MCF 10A (cell line): ENCODE measurements at regions of chr3 and their contacts with region 1.

Region 1: DNA sequence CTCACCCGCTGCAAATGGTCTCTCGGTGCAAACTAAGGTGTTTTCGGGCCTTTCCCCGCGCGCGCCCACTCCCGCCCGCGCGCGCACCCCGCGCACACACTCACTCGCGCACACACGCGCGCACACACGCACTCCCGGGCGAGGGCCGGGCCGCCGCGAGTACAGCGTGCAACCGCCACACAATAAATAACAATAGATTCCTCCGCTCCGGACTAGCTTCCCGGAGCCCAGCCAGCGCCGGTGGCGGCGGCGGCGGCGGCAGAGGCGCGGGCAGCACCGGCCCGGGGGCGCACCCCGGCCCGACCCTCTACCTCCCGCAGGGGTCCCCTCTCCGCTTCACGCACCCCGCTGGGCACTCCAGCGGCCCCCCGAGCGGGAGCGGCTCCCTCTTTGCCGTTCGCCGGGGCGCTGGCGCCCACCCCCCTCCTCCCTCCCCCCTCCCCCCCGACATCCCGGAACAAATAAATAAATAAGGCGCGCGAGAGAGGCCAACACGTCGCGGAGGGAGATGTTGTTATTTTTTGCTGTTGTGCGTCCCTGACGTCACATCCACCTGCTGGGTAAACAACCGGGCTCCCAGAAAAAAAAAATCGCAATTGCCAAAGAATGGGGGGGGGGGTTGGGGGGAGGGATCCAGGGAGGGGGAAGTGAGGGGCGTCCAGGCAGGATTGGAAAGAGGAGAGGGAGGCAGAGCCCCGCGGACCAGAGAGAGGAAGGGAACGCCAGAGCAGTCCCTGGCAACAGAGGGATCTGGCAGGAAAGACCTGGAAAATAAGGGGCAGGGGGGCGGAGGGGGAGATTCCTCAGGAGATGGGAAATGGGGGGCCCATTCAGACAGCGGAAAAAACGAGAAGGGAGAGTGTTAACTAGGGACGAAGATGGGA is at the start of gene FOXP1:
- DNase-seq: peak; percentile 64
- H3K4me3 Mint-ChIP-seq: peak within 1 kb of the TSS; percentile 85
- H3K27ac Mint-ChIP-seq: peak within 1 kb of the TSS; percentile 97
- H3K4me1 Mint-ChIP-seq: peaks cover 13% of the 10 kb centered on the region
- H3K27me3 Mint-ChIP-seq: no peaks in the 10 kb centered on the region
- CTCF ChIP-seq: no peak
- total RNA-seq, gene FOXP1: 49.0 and 51.1 TPM in 2 replicates

Region 2: DNA sequence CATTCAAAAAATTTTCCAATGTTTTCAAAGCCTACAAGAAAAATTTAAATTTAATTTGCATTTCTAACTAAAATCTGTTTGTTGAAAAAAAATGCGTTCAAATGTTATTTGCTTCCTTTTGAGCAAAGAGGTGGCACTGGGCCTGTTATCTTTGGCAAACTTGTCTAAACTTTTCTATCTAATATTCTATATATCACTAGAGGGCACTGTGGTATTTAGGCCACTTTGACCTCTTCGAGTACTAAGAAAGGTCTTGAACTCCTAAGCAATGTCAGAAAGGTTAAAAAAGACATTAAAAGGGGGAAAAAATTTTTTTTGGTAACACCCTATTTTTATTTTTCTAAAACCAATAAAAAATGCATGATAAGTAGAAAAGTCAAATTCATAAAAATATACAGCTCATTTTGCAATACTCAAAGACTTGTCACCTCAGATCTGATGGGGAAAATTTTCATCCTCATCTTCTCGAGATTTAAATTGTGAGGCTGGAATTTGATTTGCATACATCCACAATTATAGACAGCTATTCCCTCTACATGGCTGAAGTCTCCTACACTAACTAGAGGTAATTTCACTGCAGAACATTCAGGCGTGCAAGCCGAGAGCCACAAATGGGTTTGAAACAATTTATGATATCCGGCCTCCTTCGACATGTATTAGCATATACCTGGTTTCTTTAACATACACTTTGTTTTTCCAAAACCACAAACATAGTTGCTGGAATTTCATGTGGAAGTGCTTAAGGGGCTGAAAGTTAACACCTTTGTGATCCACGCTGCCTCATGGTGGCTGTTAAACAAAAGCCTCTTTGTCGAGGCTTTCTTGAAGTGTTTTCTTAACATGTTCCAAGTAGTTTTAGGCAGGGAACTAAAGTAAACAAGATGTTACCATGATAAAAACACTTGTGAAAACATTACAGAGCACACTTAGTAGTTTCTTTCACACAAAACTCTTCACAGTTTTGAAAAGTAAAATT is 576.7 kb before region 1 on chr3:
- CTCF ChIA-PET with region 1: interaction called, 15 read pairs
- POLR2A ChIA-PET with region 1: interaction called, 5 read pairs
- intact Hi-C with region 1: loop called (anchors 1 kb)
- DNase-seq: peak; percentile 48
- H3K4me3 Mint-ChIP-seq: no peak overlapping the region
- H3K27ac Mint-ChIP-seq: peak overlapping the region; percentile 63
- H3K4me1 Mint-ChIP-seq: peaks cover 15% of the 10 kb centered on the region
- H3K27me3 Mint-ChIP-seq: no peaks in the 10 kb centered on the region
- CTCF ChIP-seq: peak; percentile 61

Region 3: DNA sequence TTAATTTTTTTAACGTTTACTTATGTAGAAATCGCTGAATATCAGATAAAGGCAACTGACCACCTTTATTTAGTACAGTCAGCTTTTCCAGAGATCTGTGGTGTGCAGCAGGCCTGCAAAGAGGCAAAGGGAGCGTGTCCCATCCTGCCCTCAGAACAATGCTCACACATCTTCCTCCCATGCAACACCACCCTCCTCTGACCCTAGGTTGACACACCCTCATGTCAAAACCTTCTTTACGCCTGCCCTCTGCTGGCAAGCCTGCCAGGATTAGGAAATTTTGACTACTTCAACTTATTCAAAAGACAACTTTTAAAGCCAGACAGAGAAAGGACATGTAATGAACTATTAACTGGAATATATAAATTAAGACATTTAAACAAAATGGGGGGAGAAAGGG is 514.0 kb before region 1 on chr3:
- CTCF ChIA-PET with region 1: interaction called, 23 read pairs
- POLR2A ChIA-PET with region 1: interaction called, 219 read pairs
- intact Hi-C with region 1: loop called (anchors 2 kb)
- DNase-seq: peak; percentile 93
- H3K4me3 Mint-ChIP-seq: peak overlapping the region; percentile 48
- H3K27ac Mint-ChIP-seq: peak overlapping the region; percentile 10
- H3K4me1 Mint-ChIP-seq: peaks cover 25% of the 10 kb centered on the region
- H3K27me3 Mint-ChIP-seq: no peaks in the 10 kb centered on the region
- CTCF ChIP-seq: peak; percentile 71

Region 4: DNA sequence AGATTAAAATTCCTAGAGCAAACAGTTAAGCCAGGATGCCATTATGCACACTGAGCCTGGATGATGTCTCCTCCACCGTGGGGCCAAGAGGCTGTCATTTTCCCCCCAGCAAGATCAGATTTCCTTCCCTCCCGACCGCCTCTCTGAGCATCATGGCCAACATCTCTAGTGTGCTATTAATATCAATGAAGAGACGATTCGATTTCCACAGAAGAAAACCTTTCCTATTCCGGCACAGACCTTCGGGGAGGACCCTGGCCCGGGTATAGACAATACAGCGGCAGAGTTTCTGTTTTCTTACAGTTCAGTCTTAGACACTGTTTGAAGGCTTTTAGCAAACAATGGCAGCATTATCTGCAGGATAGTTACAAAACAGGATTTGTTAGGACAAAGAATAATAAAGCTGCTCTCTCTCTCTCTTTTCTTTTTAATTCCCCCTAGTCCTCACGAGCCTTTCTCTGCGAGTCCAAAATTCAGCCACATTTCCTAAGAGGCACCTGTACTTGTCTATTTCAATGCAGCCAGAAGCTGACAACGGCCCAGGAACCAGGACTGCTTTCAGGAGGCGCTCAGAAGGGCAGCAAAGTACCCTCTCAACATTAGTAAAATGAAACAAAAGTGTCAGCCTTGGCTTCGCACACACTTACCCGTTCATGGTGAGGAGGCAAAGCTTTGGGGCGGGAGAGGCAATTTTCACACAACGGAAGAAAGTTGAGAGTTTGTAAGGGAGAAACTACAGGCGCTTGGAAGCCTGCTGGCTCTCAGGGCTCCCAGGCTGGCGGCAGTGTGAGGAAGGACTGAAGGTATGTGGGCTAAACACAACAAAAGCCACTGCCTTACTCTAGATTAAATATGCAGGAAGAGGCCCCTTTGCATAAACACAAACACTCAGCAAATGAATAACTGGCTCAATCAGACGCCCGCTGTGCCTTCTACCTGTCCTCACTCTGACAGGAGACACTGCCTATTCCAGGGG is 278.3 kb before region 1 on chr3:
- CTCF ChIA-PET with region 1: interaction called, 3 read pairs
- POLR2A ChIA-PET with region 1: interaction called, 3 read pairs
- intact Hi-C with region 1: loop called (anchors 5 kb)
- DNase-seq: no peak
- H3K4me3 Mint-ChIP-seq: peak overlapping the region; percentile 53
- H3K27ac Mint-ChIP-seq: peak overlapping the region; percentile 34
- H3K4me1 Mint-ChIP-seq: peaks cover 13% of the 10 kb centered on the region
- H3K27me3 Mint-ChIP-seq: no peaks in the 10 kb centered on the region
- CTCF ChIP-seq: no peak

Region 5: DNA sequence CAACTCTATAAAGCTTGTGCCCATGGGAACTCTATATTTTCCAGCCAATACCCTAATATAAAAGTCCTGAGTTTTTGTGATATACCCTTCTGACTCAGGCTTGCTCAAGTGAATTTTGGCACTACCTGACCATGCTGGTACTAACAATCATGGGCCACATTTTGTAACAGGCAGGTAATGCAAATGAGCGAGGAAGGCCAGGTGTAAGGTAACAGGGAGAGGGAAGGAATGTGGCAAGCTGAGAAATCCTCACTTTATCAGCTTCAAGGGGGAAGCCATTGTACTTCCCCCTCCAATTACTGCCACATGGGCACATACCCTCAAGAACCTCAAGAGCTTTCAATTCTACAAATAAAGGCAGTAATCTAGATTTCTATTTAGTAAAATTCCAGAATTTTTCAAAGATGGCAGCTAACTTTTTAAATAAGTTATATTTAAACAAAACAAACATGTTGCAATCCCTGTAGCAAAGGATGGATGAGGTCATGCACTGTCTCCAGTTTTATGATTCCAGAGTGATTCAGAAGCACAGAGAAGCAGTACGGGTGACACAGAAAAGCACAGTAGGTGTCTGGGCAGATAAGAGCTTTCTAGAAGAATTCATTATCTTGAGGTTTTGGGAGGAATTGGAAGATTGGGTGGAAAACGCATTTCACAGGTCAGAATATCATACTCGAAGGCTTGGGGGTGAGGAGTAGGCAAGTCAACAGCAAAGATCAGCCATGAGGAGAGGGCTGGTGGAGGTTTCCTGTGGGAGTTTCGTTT is 87.9 kb before region 1 on chr3:
- CTCF ChIA-PET with region 1: interaction called, 6 read pairs
- POLR2A ChIA-PET with region 1: interaction called, 90 read pairs
- intact Hi-C with region 1: loop called (anchors 1 kb)
- DNase-seq: peak; percentile 89
- H3K4me3 Mint-ChIP-seq: peak overlapping the region; percentile 80
- H3K27ac Mint-ChIP-seq: peak overlapping the region; percentile 96
- H3K4me1 Mint-ChIP-seq: peaks cover 24% of the 10 kb centered on the region
- H3K27me3 Mint-ChIP-seq: no peaks in the 10 kb centered on the region
- CTCF ChIP-seq: no peak

Region 6: DNA sequence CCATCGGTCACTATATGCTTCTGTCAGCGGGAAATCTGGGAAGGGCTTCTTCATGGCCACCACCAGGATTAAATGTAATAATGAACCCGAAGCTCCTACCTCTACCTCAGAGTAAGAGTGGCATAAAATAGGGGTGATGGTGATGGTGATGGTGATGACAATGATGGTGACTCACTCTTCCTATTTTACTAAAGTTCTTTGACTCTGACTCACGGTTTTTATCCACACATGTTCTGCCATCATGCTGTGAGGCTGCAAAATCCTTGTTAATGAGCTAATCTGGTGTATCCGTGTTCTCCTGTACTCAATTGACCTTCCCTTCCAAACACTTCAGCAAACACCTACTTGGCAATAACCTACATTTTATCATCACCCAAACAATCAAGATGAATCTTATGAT is 18.0 kb after region 1 on chr3:
- CTCF ChIA-PET with region 1: interaction called, 21 read pairs
- POLR2A ChIA-PET with region 1: interaction called, 3 read pairs
- intact Hi-C with region 1: no loop called
- DNase-seq: peak; percentile 67
- H3K4me3 Mint-ChIP-seq: no peak overlapping the region
- H3K27ac Mint-ChIP-seq: no peak overlapping the region
- H3K4me1 Mint-ChIP-seq: peaks cover 15% of the 10 kb centered on the region
- H3K27me3 Mint-ChIP-seq: no peaks in the 10 kb centered on the region
- CTCF ChIP-seq: no peak